Activated T-helper 1 cell treated with anti-CD3 and anti-CD28 coated beads, Interleukin-12 subunit alpha, Interleukin-12 subunit beta, Interleukin-2, Interleukin-4 antibody, amounts not matched to agents 30 ng/mL and 10 ng/mL and 1 ng/mL, durations not matched to agents 14 hours and 24 hours and 36 hours (primary cell): ENCODE measurements at regions of chr5 and their contacts with region 1.

Region 1: GRCh38 chr5:139446956-139447779 is 7.8 kb upstream of the DNAJC18 start:
- DNase-seq: no peak
- H3K4me3 Mint-ChIP-seq: peak overlapping the region; percentile 46
- H3K27ac Mint-ChIP-seq: peak overlapping the region; percentile 98
- H3K4me1 Mint-ChIP-seq: peaks cover 64% of the 10 kb centered on the region
- H3K27me3 Mint-ChIP-seq: no peaks in the 10 kb centered on the region

Region 2: GRCh38 chr5:138932171-138932810 is 514.9 kb before region 1 on chr5:
- intact Hi-C with region 1: no loop called
- DNase-seq: no peak
- H3K4me3 Mint-ChIP-seq: no peak overlapping the region
- H3K27ac Mint-ChIP-seq: no peak overlapping the region
- H3K4me1 Mint-ChIP-seq: no peaks in the 10 kb centered on the region
- H3K27me3 Mint-ChIP-seq: no peaks in the 10 kb centered on the region

Region 3: DNA sequence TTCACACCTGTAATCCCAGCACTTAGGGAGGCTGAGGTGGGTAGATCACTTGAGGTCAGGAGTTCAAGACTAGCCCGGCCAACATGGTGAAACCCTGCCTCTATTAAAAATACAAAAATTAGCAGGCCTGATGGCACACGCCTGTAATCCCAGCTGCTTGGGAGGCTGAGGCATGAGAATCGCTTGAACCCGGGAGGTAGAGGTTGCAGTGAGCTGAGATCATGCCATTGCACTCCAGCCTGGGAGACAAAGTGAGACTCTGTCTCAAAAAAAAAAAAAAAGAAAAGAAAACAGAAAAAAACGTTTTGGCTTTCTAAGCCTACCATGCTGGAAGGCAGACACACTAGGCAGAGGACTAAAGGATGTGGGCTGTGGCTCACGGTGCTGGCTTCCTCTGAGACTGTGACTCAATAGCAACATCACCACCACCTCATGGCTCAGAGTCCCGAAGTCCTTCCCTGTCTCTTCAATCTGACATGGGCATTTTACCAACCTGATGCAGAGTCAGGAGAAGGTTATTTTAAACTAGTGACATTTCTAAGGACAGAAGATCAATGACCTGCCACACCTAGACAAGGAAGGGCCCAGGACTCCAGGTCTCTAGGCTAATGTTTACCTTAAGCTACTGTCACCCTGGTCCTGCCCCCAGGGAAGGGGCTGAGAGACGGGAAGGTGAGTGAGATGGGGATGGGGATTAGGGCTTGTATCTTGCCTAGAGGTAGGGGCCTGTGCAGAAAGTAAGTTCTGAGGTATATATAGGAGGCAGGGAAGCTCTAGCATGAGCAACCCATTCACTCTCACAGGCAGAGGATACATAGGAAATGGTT is 11.6 kb after region 1 on chr5:
- intact Hi-C with region 1: loop called (anchors 1 kb)
- DNase-seq: peak; percentile 80
- H3K4me3 Mint-ChIP-seq: peak overlapping the region; percentile 81
- H3K27ac Mint-ChIP-seq: peak overlapping the region; percentile 99
- H3K4me1 Mint-ChIP-seq: peaks cover 72% of the 10 kb centered on the region
- H3K27me3 Mint-ChIP-seq: no peaks in the 10 kb centered on the region

Region 4: GRCh38 chr5:139474890-139475791 is 28.0 kb after region 1 on chr5:
- intact Hi-C with region 1: loop called (anchors 1 kb)
- DNase-seq: no peak
- H3K4me3 Mint-ChIP-seq: peak overlapping the region; percentile 64
- H3K27ac Mint-ChIP-seq: peak overlapping the region; percentile 92
- H3K4me1 Mint-ChIP-seq: peaks cover 89% of the 10 kb centered on the region
- H3K27me3 Mint-ChIP-seq: no peaks in the 10 kb centered on the region

Region 5: DNA sequence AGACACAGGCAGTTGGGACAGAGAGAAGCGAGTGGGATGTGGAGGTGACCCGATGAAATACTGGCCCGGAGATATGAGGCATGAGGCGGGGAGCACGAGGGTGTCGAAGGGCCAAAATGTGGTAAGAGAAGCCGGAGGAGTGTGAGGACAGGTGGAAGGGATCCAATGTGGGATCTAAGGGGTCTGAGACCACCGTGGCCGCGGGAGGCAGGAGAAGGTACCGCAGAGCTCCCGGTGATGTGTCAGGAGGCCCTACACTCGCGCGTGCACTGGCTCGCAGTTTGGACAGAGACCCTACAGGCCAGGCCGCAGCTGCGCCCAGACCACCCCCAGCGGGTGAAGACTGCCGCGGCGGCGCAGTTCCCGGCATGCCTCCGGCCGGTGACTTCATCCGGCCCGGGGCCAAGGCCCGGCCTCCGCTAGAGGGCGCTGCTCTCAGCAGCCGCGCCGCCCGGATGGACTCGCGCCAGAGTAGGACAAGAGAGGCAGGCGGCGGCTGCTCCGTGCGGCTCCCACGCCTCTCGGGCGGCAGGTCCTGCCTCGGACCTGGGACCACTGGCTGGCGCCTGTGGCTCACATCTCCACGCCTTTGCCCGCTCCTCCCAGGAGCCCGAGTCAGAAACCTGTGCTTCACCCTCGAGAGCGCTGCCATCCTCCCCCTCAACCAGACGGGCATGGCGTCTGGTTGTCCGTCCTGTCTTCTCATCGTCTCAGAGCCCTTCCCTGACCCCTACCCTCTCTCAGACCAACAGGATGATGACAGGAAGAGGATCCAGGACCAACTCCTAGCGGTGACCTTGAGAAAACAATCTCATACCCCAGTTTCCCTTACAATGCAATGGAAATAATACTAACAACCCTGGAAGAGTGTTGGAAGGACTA is 70.8 kb after region 1 on chr5:
- intact Hi-C with region 1: no loop called
- DNase-seq: peak; percentile 88
- H3K4me3 Mint-ChIP-seq: peak overlapping the region; percentile 86
- H3K27ac Mint-ChIP-seq: peak overlapping the region; percentile 90
- H3K4me1 Mint-ChIP-seq: peaks cover 36% of the 10 kb centered on the region
- H3K27me3 Mint-ChIP-seq: peaks cover 2% of the 10 kb centered on the region